Activated CD4-positive, alpha-beta memory T cell treated with anti-CD3 and anti-CD28 coated beads, Interleukin-2, amount 10 ng/mL, durations not matched to agents 7 days and 5 days (primary cell): ENCODE measurements at regions of chr17 and their contacts with region 1.

Region 1: DNA sequence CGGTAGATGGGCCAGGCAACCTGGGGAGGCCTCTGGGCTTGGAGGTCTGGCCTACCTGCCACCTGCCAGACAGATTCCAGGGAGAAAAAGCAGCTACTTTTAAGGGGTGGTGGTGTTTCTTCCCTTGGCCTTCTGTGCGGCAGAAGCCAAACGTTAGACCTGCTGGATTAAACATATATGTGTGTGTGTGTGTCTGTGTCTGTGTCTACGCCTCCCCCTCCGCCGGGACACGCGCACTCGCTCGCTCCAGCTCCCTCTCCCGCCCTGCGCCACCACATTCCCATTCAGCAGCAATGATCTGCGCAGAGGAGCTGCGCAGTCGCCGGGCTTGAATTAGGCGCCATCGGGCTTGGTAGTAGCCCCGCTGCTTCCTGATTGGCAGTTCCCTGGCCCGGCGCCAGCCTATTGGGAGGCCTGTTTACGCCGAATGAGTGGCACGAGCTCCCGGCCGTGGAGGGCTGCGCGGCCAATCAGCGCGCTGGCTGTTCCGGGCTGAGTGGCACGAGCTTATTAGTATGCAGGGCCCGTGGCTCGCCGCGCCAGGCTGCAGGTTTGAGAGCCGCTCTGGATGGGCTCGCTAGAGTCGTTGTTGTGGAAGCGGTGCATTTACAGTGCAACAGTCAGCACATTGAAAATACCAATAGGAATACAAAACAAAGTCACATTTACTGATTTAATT is at the start of gene BAHCC1:
- DNase-seq: peak; percentile 81
- H3K4me3 Mint-ChIP-seq: peak within 1 kb of the TSS; percentile 53
- H3K27ac Mint-ChIP-seq: peak within 1 kb of the TSS; percentile 56
- H3K4me1 Mint-ChIP-seq: peaks cover 30% of the 10 kb centered on the region
- H3K27me3 Mint-ChIP-seq: peaks cover 59% of the 10 kb centered on the region
- total RNA-seq, gene BAHCC1: 0.15 to 0.18 TPM

Region 2: DNA sequence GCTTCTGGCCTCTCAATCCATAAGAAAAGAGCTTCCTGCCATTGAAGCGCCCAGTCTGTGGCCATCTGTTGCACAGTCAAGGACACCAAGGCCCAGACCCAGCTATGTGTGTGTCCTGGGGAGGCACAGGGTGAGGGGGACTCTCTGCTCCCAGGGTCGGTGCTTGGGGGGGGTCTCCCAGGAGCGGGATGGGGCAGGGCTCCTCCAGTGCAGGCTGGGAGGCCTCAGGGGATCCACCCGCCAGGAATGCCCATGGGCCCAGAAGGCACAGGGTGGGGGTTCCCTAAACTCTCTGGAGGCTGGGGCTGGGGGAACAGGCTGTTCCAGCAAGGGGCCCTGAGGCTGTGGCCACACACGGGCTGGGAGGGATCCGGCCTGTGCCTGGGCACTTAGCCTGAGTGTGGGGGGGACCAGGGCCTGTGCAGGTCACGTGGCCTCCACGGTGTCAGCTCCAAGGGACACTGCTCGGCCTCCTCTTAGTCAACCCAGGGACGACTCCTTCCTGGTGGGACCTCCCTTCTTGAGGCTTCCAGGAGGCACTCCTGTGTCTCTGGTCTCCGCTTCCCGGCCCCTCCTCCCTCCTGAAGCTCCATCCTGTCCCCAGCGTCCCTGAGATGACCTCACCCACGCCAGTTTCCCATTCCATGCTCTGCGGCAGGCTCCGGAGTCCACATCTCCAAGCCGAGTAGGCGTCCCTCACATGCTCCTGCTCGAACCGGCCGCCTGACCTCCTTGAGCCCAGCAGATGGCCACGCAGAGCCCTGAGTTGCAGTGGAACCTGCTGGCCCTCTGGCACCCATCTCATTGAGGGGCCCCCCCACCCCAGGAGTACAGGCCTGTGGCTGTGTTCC is 22.9 kb before region 1 on chr17:
- CTCF ChIA-PET with region 1: no interaction called
- POLR2A ChIA-PET with region 1: no interaction called
- DNase-seq: no peak
- H3K4me3 Mint-ChIP-seq: no peak overlapping the region
- H3K27ac Mint-ChIP-seq: no peak overlapping the region
- H3K4me1 Mint-ChIP-seq: no peaks in the 10 kb centered on the region
- H3K27me3 Mint-ChIP-seq: no peaks in the 10 kb centered on the region

Region 3: DNA sequence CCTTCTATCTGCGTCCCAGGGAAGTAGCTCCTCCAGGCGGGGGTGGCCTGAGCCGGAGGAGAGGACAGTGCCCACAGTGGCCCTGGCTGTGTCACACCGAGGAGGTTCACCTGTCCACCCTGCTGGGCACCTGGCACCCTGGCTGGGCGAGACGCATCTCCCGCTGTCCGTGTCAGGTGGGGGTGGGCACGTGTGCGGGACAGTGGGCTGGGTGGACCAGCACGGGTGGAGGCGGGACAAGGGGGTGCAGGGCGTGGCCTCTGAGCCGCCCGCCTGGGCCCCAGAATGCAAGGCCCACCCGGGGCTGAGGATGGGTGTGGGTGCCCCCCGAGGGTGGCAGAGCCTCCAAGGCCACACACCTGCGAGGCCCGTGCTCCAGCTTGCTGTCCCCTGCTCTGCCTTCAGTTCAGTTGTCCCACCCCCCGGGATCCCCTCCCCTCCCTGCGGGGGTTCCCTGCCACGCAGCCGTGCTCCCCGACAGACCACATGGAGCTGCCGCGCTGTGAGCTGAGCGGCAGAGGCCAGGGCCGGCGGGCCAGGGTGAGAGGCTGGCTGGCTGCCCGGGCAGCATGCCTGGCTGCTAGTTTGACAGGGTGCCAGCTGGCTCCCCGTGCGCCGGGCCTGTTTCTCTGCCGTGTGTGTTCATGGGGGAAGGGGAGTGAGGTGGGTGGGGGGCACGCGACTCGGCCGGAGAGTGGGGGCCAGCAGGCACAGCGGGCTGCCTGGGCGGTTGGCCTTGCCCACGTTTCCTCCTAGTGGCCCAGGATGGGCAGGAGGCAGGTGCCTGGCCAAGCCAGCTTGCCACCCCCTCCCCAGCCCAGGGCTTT is 34.1 kb after region 1 on chr17:
- CTCF ChIA-PET with region 1: interaction called, 3 read pairs
- POLR2A ChIA-PET with region 1: interaction called, 10 read pairs
- DNase-seq: no peak
- H3K4me3 Mint-ChIP-seq: no peak overlapping the region
- H3K27ac Mint-ChIP-seq: no peak overlapping the region
- H3K4me1 Mint-ChIP-seq: no peaks in the 10 kb centered on the region
- H3K27me3 Mint-ChIP-seq: peaks cover 13% of the 10 kb centered on the region

Region 4: GRCh38 chr17:81651692-81652091 is 256.6 kb after region 1 on chr17:
- CTCF ChIA-PET with region 1: no interaction called
- POLR2A ChIA-PET with region 1: no interaction called
- DNase-seq: no peak
- H3K4me3 Mint-ChIP-seq: no peak overlapping the region
- H3K27ac Mint-ChIP-seq: no peak overlapping the region
- H3K4me1 Mint-ChIP-seq: peaks cover 20% of the 10 kb centered on the region
- H3K27me3 Mint-ChIP-seq: peaks cover 18% of the 10 kb centered on the region